SK-N-SH (cell line): ENCODE measurements at regions of chr9 and their contacts with region 1.

Region 1: GRCh38 chr9:130107234-130107861 is 53.6 kb downstream of the GPR107 start:
- DNase-seq: peak; percentile 80
- H3K4me3 ChIP-seq: no peak overlapping the region; a peak in 1 of 4 replicates
- H3K27ac ChIP-seq: peak overlapping the region in 1 of 2 experiments; percentile 16; a peak in 1 of 4 replicates
- H3K4me1 ChIP-seq: peaks cover 0 to 18% of the 10 kb centered on the region in 2 experiments; a peak in 1 of 4 replicates
- H3K27me3 ChIP-seq: no peaks in the 10 kb centered on the region
- CTCF ChIP-seq: peak; percentile 90
- EP300 ChIP-seq: no peak
- RAD21 ChIP-seq: peak; percentile 95

Region 2: GRCh38 chr9:130118841-130119518 is 11.6 kb after region 1 on chr9:
- CTCF ChIA-PET with region 1: interaction called, 54 read pairs
- POLR2A ChIA-PET with region 1: no interaction called
- DNase-seq: peak; percentile 87
- H3K4me3 ChIP-seq: no peak overlapping the region
- H3K27ac ChIP-seq: peak overlapping the region; percentile 68 to 80
- H3K4me1 ChIP-seq: peaks cover 21 to 25% of the 10 kb centered on the region in 2 experiments; a peak in 3 of 4 replicates
- H3K27me3 ChIP-seq: no peaks in the 10 kb centered on the region
- CTCF ChIP-seq: no peak
- EP300 ChIP-seq: peak in 1 of 2 experiments; percentile 85; a peak in 2 of 4 replicates
- RAD21 ChIP-seq: peak; percentile 5; the same call in 1 of the 2 replicates

Region 3: GRCh38 chr9:130172161-130172857 is 65.0 kb after region 1 on chr9 and contains the start of gene NCS1:
- CTCF ChIA-PET with region 1: interaction called, 22 read pairs
- POLR2A ChIA-PET with region 1: interaction called, 3 read pairs
- DNase-seq: peak; percentile 99
- H3K4me3 ChIP-seq: peak within 1 kb of the TSS; percentile 67 to 82
- H3K27ac ChIP-seq: peak within 1 kb of the TSS; percentile 30 to 64; a peak in 3 of 4 replicates
- H3K4me1 ChIP-seq: peaks cover 6 to 20% of the 10 kb centered on the region in 2 experiments; a peak in 1 of 4 replicates
- H3K27me3 ChIP-seq: no peaks in the 10 kb centered on the region
- CTCF ChIP-seq: no peak
- EP300 ChIP-seq: no peak
- RAD21 ChIP-seq: no peak
- polyA plus RNA-seq, gene NCS1: 40.6 and 52.9 TPM in 2 replicates

Region 4: DNA sequence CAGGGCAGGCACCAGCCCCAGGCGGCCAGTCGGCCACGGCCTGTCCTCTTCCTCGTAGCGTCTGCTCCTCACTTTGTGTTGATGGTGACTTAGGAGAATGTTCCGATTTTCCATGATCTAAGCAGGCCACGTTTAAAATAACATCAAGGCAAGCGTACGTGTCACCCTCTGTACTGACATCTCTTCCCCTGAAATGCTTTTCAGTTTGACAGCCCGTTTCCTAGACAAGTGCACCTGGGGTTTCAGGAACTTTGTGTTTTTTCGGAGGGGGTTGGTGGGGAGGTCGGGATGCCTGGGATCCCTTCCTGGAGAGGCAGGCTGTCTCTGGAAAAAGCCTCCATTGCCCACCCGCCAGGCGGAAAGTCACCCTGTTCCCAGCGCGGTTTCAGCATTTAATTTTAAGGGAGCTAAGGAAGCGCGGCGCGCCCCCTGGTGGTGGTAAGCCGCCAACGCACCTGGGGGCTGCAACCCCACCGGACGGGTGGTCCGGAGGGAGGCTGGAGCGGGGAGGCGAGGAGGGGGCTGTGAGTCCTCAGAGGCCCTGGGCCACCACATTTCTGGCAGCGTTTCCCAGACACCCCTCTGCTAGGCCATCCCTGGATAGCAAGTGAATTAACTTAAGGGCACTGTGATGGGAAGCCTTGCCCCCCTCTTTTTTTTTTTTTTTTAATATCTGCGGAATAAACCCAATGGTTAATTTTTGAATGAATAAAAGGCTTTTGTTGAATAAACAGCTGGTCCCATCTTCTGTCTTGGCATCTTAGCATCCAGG is 128.7 kb after region 1 on chr9:
- CTCF ChIA-PET with region 1: interaction called, 73 read pairs
- POLR2A ChIA-PET with region 1: no interaction called
- DNase-seq: peak; percentile 90
- H3K4me3 ChIP-seq: peak overlapping the region in 1 of 2 experiments; percentile 47; a peak in 1 of 4 replicates
- H3K27ac ChIP-seq: no peak overlapping the region; a peak in 1 of 4 replicates
- H3K4me1 ChIP-seq: peaks cover 0 to 15% of the 10 kb centered on the region in 2 experiments; a peak in 1 of 4 replicates
- H3K27me3 ChIP-seq: no peaks in the 10 kb centered on the region
- CTCF ChIP-seq: peak; percentile 98
- EP300 ChIP-seq: no peak
- RAD21 ChIP-seq: peak; percentile 86

Region 5: GRCh38 chr9:130336885-130337284 is 229.5 kb after region 1 on chr9:
- CTCF ChIA-PET with region 1: interaction called, 30 read pairs
- POLR2A ChIA-PET with region 1: no interaction called
- DNase-seq: no peak
- H3K4me3 ChIP-seq: no peak overlapping the region
- H3K27ac ChIP-seq: no peak overlapping the region
- H3K4me1 ChIP-seq: peaks cover 0 to 34% of the 10 kb centered on the region in 2 experiments; a peak in 1 of 4 replicates
- H3K27me3 ChIP-seq: no peaks in the 10 kb centered on the region
- CTCF ChIP-seq: no peak
- EP300 ChIP-seq: no peak
- RAD21 ChIP-seq: no peak